ENCODE measurements at regions of chr12 and their contacts with region 1.

Region 1: DNA sequence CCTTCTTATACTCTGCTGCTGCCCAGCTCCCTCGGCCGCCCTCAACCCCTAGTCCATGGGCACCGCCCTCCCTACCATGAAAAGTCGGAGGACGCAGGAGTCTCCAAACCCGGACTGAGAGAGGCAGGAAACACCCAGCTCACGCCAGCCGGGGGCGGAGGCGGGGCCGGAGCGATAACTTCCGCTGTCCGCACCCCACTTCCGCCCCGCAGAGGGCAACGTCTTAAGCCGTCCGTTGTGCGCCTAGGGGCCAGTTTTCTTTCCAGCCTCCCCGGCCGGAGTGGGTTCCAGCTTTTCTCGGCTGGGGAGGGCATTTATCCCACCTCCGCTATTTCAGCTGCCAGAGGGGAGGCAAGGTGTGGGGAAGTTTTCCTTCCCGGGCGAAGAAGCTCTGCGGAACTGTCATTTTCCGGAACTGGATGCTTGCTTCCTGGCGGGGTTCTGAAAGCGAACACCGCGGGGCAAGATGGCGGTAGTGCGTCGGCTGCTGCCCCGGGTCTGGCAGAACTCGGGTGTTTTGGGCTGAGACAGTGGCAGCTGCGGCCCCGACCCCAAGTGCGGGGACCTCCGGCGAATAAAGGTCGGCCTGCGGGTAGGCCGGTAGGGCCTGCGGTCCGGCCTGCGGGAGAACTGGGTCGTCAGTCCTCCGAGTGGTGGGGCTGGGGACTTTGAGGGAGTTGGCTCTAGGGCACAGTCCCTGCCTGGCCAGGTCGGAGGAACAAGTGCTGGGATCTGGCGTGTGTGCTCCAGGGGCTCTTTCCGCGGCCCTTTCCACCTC is at the starts of genes KCTD10 and UBE3B:
- ATAC-seq: peak; percentile 91 to 99 (median 98)
- H3K4me3 ChIP-seq: peak within 1 kb of the TSS; percentile 62 to 97 (median 93)
- H3K27ac ChIP-seq: peak within 1 kb of the TSS; percentile 98
- H3K4me1 ChIP-seq: peaks cover 10 to 14% of the 10 kb centered on the region in 2 donors
- total RNA-seq, gene KCTD10: 21.9 to 53.6 (median 40.2) TPM
- total RNA-seq, gene UBE3B: 13.4 to 47.7 (median 24.3) TPM

Region 2: DNA sequence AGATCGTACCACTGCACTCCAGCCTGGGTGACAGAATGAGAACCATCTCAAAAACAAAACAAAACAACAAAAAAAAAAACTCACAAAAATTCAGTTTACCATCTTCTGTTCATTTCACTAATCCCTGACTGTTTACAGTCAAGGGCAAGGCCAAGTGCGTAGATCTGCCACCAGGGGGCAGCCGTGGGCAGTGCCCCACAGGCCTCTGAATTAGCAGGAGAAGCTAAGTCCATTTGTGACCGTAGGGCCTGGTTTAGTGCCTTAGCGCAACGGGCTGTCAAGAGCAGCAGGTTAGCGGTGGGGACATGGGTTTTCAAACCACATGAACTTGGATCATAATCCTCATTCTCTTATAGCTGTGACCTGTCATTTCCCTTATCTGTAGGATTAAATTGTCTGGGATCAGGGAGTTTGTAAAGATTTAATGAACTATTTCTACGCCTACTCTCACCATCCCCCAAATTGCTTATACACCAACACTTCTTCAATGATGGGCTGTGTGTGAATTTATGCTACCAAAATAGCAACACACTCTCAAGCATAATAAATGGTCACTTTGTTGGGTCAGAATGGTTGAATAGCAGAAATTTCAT is 49.2 kb before region 1 on chr12:
- in situ Hi-C with region 1: loop called in 1 of 9 experiments (anchors 10 kb)
- ATAC-seq: peak; percentile 68 to 100 (median 81)
- H3K4me3 ChIP-seq: no peak overlapping the region
- H3K27ac ChIP-seq: no peak overlapping the region
- H3K4me1 ChIP-seq: no peaks in the 10 kb centered on the region

Measured in motor neuron (in vitro differentiated cells).